ENCODE measurements at regions of chr14 and their contacts with region 1.

Region 1: DNA sequence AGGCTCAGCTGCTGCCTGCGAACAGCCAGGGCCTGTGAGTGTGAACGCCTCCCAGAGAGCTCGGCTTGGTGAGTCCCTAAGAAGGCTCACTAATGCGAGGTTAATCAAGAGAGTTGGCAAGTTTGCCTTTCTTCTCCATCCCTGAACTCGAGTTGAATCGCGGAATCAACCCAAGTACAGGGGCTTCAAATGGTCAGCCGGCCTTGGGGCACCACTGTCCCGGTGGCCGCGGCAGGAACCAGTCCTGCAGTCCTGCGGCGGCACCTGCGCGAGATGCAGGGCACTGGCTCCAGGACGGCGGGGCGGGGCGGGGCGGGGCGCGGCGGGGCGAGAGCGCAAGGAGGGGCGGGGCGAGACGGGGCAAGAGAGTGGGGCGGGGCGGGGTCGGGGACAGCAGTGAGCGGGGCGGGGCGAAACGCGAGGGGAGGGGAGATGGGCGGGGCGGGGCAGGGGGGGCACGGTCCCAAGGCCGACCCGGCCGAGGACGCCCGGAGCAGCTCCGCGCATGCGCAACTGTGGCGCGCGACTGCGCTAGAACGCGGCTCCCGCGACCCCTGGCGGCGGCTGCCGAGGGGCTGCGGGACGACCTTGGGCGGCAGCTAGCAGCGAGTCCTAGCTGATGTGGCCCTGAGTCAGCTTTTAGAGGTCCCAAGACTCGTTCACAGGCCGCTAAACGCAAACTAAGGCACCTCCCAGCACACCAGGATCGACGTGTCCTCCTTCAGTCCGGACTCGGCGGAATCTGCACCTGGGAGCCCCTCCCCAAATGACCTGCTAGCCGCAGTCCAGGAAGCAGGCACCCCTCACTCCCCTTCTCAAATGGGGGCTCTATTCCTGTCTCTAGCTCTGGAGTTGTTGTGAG is 58.0 kb downstream of the TTC7B start:
- DNase-seq: peak; percentile 95
- ATAC-seq: peak; percentile 88
- H3K4me3 Mint-ChIP-seq: peak overlapping the region; percentile 79
- H3K27ac Mint-ChIP-seq: peak overlapping the region; percentile 86
- H3K4me1 Mint-ChIP-seq: peaks cover 24% of the 10 kb centered on the region
- H3K27me3 Mint-ChIP-seq: peaks cover 2% of the 10 kb centered on the region
- CTCF ChIP-seq: no peak

Region 2: DNA sequence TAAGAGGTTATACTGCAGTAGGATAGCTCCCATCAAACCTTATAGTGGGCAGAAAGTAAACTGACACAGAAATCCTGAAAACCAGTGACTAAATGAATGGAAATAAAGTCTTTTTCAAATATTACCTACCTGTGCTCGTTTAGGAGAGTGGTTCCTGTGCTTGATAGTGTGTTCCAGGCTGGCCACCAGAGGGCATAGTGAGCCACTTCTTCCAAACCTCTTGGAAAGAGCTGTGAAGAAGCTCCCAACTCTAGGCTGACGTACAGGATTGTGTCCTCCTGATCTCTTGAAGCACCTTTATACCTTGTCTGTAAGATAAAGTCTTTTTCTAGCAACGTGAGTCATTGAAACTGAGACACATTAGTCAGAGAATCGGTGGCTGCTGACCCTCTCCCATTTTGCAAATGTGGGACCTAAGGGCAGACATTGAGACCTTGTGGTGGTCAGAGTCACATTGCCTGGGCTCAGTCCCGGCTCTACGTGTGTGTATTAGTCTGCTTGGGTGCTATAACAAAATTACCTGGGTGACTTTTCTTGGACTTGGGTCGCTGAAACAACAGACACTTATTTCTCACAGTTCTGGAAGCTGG is 784.9 kb before region 1 on chr14:
- CTCF ChIA-PET with region 1: interaction called, 8 read pairs
- POLR2A ChIA-PET with region 1: no interaction called
- intact Hi-C with region 1: loop called (anchors 1 kb)
- DNase-seq: no peak
- ATAC-seq: peak; percentile 60
- H3K4me3 Mint-ChIP-seq: no peak overlapping the region
- H3K27ac Mint-ChIP-seq: no peak overlapping the region
- H3K4me1 Mint-ChIP-seq: no peaks in the 10 kb centered on the region
- H3K27me3 Mint-ChIP-seq: no peaks in the 10 kb centered on the region
- CTCF ChIP-seq: peak; percentile 83

Region 3: DNA sequence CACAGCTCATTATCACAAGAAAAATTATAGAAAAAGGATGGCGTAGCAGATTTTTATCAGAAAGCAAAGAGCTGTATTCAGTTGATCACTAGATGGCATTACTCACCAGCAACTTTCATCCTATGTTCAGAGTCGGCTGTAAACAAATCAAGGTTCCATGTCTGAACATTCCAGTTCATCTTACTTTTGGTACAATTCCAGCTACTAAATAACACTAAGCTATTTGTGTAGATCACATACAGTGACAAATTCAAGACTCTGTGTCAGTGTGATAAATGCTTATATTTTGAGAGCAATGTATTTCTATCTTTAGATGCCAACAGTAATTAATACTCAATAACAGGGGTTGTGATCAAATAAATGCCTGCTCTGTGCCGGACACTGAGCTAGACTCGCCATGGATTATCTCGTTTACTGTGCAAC is 456.6 kb before region 1 on chr14:
- CTCF ChIA-PET with region 1: interaction called, 12 read pairs
- POLR2A ChIA-PET with region 1: no interaction called
- intact Hi-C with region 1: loop called (anchors 1 kb)
- DNase-seq: no peak
- ATAC-seq: no peak
- H3K4me3 Mint-ChIP-seq: no peak overlapping the region
- H3K27ac Mint-ChIP-seq: no peak overlapping the region
- H3K4me1 Mint-ChIP-seq: peaks cover 6% of the 10 kb centered on the region
- H3K27me3 Mint-ChIP-seq: no peaks in the 10 kb centered on the region
- CTCF ChIP-seq: no peak

Region 4: GRCh38 chr14:90697577-90698206 is 60.6 kb before region 1 on chr14:
- CTCF ChIA-PET with region 1: interaction called, 7 read pairs
- POLR2A ChIA-PET with region 1: no interaction called
- intact Hi-C with region 1: loop called (anchors 1 kb)
- DNase-seq: peak; percentile 37
- ATAC-seq: peak; percentile 75
- H3K4me3 Mint-ChIP-seq: no peak overlapping the region
- H3K27ac Mint-ChIP-seq: no peak overlapping the region
- H3K4me1 Mint-ChIP-seq: peaks cover 4% of the 10 kb centered on the region
- H3K27me3 Mint-ChIP-seq: peaks cover under 1% of the 10 kb centered on the region
- CTCF ChIP-seq: peak; percentile 76

Region 5: GRCh38 chr14:90827916-90828610 is 69.8 kb after region 1 on chr14:
- CTCF ChIA-PET with region 1: interaction called, 3 read pairs
- POLR2A ChIA-PET with region 1: no interaction called
- intact Hi-C with region 1: loop called (anchors 1 kb)
- DNase-seq: peak; percentile 88
- ATAC-seq: peak; percentile 100
- H3K4me3 Mint-ChIP-seq: peak overlapping the region; percentile 81
- H3K27ac Mint-ChIP-seq: peak overlapping the region; percentile 65
- H3K4me1 Mint-ChIP-seq: peaks cover 12% of the 10 kb centered on the region
- H3K27me3 Mint-ChIP-seq: no peaks in the 10 kb centered on the region
- CTCF ChIP-seq: no peak

Region 6: DNA sequence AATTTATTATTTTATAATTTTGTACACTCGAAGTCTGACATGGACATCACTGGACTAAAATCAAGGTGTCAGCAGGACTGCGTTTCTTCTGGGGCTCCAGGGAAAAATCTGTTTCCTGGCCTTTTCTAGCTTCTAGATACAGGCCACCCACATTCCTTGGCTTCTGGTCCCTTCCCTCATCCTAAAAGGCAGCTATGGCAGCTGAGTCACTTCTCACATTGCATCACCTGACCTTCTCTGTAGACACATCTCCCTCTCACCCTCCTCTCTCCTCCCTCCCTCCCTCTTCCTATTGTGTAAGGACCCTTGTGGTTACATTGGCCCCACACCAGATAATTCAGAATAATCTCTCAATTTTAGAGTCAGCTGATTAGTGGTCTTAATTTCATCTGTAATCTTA is 209.8 kb after region 1 on chr14:
- CTCF ChIA-PET with region 1: no interaction called
- POLR2A ChIA-PET with region 1: no interaction called
- intact Hi-C with region 1: no loop called
- DNase-seq: no peak
- ATAC-seq: no peak
- H3K4me3 Mint-ChIP-seq: no peak overlapping the region
- H3K27ac Mint-ChIP-seq: no peak overlapping the region
- H3K4me1 Mint-ChIP-seq: peaks cover 7% of the 10 kb centered on the region
- H3K27me3 Mint-ChIP-seq: no peaks in the 10 kb centered on the region
- CTCF ChIP-seq: no peak

Measured in activated B cell treated with CpG ODN at 0.5 μM for 24 hours (primary cell).